Activated CD8-positive, alpha-beta T cell treated with anti-CD3 and anti-CD28 coated beads, Interleukin-2, amount 10 ng/mL, durations not matched to agents 7 days and 5 days (primary cell): ENCODE measurements at regions of chr6 and their contacts with region 1.

Region 1: DNA sequence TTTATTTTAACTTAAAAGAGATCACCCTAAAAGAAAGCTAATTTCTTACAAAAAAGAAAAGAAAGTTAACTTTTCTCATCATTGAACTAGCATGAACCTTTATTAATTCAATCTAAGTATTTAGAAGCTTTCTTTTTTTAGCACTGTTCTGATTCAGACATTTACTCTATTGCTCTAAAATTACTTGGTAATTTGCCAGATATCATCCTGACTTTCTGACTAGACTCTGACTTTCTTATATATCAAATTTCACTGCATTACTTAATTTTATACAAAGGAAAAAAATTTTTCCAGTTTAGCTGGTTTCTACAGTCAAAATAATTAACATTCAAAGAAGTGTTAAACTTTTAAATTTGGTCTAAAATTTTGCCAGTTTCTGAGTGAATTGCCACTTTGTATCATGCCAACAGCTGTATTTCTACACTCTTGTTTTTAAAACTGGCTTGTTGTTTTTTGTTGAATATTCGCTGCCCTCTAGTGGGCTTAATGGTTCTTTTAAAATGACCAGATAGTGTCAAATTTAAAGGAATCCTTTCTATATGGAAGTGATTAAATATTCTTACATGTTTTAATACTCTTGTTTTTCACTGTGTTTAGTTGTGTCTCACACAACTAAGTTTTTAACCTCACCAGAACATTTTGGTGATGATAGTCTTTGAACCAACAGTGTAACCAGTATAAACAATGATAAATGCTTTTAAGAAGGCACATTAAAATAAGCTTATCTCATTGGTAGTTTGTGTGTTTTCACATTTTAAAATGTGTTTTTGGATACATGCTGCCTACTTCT is 102.0 kb downstream of the POPDC3 start:
- DNase-seq: no peak
- ATAC-seq: no peak
- H3K4me3 Mint-ChIP-seq: no peak overlapping the region
- H3K27ac Mint-ChIP-seq: no peak overlapping the region
- H3K4me1 Mint-ChIP-seq: no peaks in the 10 kb centered on the region
- H3K27me3 Mint-ChIP-seq: peaks cover 14% of the 10 kb centered on the region

Region 2: DNA sequence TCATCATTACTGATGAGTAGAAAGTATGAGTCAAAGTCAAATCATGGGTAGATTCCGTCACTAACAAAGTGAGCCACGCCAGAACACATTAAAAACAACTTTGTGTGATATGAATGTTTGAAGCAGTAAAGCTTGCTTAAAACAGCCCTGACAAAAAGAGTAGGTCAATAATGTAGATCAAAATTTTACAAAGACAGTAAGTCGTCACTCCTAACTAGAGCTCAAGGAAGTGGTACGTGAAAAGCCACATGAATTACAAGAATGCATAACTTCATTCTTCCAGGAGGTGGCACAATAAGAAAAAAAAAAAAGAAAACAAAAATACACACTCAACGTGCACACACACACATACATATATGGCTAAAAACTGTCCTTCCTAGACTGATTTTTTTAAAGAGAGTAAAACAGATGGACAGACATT is 288.0 kb before region 1 on chr6:
- CTCF ChIA-PET with region 1: interaction called, 28 read pairs
- POLR2A ChIA-PET with region 1: no interaction called
- DNase-seq: no peak
- ATAC-seq: peak; percentile 80
- H3K4me3 Mint-ChIP-seq: peak overlapping the region; percentile 61
- H3K27ac Mint-ChIP-seq: peak overlapping the region; percentile 91
- H3K4me1 Mint-ChIP-seq: peaks cover 32% of the 10 kb centered on the region
- H3K27me3 Mint-ChIP-seq: no peaks in the 10 kb centered on the region

Region 3: DNA sequence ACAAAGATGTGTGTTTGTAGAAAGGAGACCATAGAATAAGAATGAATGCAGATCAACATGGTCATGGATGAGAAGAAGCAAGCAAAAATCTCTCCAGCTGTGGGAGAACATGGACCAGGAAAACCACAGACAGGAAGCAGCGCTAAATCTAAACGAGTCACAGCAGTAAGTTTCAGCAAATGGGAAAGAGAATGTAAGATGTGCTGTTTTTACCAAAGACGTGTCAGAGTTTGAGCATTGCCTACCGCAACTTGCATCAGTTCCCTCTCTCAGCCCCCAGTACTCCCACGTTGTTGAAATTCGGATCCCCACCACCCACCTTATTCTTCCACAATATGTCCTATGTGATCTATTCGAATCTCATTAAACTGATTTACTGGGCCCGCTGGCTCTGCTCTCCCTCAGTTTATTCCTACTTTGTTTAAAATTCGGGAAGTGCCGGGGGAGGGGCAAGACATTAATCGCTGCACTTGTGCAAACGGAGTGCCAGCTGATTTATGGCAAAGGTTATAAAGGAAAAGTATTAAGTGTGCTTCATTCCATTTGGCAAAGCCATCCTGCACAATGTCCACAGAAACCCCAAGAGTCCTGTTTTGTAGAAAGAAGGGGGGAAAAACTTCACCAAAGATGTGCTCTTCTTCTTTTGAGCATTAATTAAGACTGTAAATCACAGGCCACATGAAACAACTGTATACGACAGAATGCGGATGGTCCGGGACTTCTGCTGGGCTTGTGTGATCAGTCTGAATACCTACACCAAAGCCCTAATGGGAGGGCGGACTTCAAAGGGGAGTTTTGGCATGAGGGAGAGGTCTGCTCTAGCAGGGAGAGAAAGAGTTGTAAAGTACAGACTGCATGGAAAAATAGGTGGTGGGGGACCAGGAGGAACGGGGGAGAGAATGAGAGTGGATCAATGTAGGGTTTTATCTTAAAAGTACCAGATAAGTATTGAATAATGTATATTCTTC is 949.2 kb after region 1 on chr6:
- CTCF ChIA-PET with region 1: no interaction called
- POLR2A ChIA-PET with region 1: no interaction called
- DNase-seq: no peak
- ATAC-seq: no peak
- H3K4me3 Mint-ChIP-seq: no peak overlapping the region
- H3K27ac Mint-ChIP-seq: no peak overlapping the region
- H3K4me1 Mint-ChIP-seq: peaks cover 10% of the 10 kb centered on the region
- H3K27me3 Mint-ChIP-seq: peaks cover 27% of the 10 kb centered on the region